ENCODE measurements at regions of chr11 and their contacts with region 1.

Region 1: GRCh38 chr11:114892381-114893197 is 214.3 kb downstream of the NXPE2 start:
- DNase-seq: no peak
- ATAC-seq: peak in 3 of 8 donors; percentile 21 to 61 (median 33)
- H3K4me3 ChIP-seq: no peak overlapping the region
- H3K27ac ChIP-seq: peak overlapping the region in 7 of 10 donors; percentile 6 to 72 (median 45)
- H3K4me1 ChIP-seq: peaks cover 0 to 26% (median 8%) of the 10 kb centered on the region in 9 donors
- H3K27me3 ChIP-seq: no peaks in the 10 kb centered on the region
- CTCF ChIP-seq: peak in 7 of 9 donors; percentile 9 to 40 (median 32)

Region 2: DNA sequence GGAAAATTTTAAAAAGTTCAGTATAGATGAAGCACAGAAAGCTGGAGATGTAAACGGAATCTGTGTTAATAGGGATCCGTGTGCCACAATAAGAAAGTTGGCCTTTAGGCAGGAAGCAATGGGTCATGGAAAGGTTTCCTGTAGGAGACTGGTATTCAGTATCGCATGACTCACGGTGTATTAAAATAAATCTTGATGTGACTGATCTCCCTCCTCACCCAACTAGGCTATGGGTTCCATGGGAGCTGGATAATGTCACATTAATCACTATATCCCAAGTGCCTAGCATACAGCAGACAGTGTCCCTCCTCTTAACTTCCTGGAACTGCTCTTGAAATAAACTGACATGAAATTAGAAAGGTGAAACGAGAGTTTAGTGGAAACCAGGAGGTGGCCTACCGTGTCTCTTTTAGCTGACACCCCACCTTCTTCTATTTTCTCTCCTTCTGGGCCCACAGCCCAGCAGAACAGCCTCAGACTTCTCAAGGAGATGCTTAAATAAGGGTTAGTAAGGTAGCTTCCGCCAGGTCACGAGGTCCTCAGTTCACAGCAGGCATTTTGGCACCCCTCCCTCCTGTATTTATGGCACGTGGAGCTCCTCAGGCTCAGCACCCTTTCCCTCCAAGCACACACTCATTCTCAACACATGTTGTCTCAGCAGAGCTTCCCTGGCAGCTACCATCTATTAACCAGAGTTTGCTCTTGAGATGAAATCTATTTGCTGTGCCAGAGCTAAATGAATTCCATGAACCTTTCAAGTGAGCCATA is 95.5 kb before region 1 on chr11:
- intact Hi-C with region 1: loop called in 3 of 10 experiments (anchors 5 kb)
- DNase-seq: peak in 1 of 2 donors; percentile 33
- ATAC-seq: peak; percentile 69 to 98 (median 94)
- H3K4me3 ChIP-seq: no peak overlapping the region
- H3K27ac ChIP-seq: peak overlapping the region; percentile 28 to 91 (median 78)
- H3K4me1 ChIP-seq: peaks cover 0 to 42% (median 5%) of the 10 kb centered on the region in 9 donors
- H3K27me3 ChIP-seq: no peaks in the 10 kb centered on the region
- CTCF ChIP-seq: no peak

Measured in heart right ventricle (tissue), 16 donors.